ENCODE measurements at regions of chr16 and their contacts with region 1.

Region 1: DNA sequence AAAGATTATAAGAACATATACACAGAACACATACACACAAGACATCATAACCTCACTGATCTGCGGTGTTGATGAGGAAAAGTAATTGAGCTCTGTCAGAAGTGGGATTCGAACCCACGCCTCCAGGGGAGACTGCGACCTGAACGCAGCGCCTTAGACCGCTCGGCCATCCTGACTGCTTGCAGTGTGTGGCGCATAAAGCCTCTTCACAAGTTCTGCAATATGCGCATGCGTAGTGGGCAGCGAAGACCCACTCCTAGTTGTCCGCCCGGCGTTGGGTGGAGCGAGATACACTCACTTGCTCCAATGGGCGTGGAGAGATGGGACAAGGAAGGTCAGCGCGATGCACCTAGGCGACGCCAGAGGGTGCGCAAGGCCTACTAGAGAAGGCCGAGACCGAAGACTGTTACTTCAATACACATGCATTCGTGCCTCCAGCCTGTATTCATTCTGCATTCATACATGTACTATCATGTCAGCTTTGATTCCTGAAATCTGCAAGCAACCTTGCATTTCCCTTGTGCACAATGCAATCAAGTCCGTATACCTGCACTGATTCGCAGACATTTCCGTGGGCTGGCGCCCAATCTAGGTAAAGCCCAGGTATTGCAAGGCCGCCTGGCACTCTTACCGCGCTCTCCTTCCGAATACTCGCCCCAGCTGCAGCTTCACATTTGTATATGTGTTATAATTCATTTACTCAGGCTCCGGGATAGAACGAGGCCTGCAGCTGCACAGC is 16.1 kb upstream of the PLLP start:
- DNase-seq: peak; percentile 99 to 100 (median 99)
- H3K4me3 ChIP-seq: peak overlapping the region; percentile 60 to 67
- H3K4me3 Mint-ChIP-seq: no peak overlapping the region
- H3K27ac ChIP-seq: peak overlapping the region; percentile 53
- H3K27ac Mint-ChIP-seq: no peak overlapping the region
- H3K4me1 ChIP-seq: peaks cover 49% of the 10 kb centered on the region
- H3K4me1 Mint-ChIP-seq: peaks cover 12 to 27% (median 17%) of the 10 kb centered on the region in 4 donors
- H3K27me3 ChIP-seq: no peaks in the 10 kb centered on the region
- H3K27me3 Mint-ChIP-seq: no peaks in the 10 kb centered on the region

Region 2: DNA sequence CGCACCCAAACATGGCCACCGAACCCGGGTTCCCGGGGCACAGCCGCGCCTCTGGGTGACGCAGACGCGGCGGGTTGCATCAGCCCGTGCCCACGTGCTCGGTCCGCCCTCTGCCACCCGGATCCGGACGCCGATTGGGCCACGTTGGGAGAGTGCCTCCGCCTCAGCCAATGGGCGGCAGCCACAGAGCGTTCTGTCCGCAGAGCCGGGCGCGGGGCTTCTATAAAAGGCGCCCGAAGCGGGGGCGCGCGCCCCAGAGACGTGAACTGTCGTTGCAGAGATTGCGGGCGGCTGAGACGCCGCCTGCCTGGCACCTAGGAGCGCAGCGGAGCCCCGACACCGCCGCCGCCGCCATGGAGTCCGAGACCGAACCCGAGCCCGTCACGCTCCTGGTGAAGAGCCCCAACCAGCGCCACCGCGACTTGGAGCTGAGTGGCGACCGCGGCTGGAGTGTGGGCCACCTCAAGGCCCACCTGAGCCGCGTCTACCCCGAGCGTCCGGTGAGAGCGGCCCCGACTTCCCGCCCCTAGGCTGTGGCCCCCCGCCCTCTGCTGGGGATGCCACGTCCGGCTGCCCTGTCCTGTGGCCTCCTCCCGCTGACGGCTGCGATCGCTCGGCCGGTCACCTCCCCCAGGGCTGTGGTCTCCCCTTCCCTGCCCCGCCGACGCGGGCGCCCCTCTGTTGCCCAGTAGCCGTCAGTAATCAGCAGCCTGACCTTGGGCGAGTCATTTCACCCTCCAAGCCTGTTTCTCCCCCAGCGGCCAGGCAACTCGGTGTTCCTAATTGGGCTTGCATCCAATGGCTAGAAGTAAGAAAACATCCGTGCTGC is 368.4 kb before region 1 on chr16 and contains the start of gene HERPUD1:
- CTCF ChIA-PET with region 1: no interaction called
- POLR2A ChIA-PET with region 1: no interaction called
- intact Hi-C with region 1: loop called (anchors 1 kb)
- DNase-seq: peak; percentile 98 to 99 (median 99)
- H3K4me3 ChIP-seq: peak within 1 kb of the TSS; percentile 51 to 83
- H3K4me3 Mint-ChIP-seq: peak within 1 kb of the TSS; percentile 95 to 99 (median 98)
- H3K27ac ChIP-seq: peak within 1 kb of the TSS; percentile 96
- H3K27ac Mint-ChIP-seq: peak within 1 kb of the TSS; percentile 95 to 99 (median 98)
- H3K4me1 ChIP-seq: peaks cover 48% of the 10 kb centered on the region
- H3K4me1 Mint-ChIP-seq: peaks cover 23 to 52% (median 37%) of the 10 kb centered on the region in 4 donors
- H3K27me3 ChIP-seq: no peaks in the 10 kb centered on the region
- H3K27me3 Mint-ChIP-seq: no peaks in the 10 kb centered on the region
- total RNA-seq, gene HERPUD1: 130 to 136 TPM

Region 3: DNA sequence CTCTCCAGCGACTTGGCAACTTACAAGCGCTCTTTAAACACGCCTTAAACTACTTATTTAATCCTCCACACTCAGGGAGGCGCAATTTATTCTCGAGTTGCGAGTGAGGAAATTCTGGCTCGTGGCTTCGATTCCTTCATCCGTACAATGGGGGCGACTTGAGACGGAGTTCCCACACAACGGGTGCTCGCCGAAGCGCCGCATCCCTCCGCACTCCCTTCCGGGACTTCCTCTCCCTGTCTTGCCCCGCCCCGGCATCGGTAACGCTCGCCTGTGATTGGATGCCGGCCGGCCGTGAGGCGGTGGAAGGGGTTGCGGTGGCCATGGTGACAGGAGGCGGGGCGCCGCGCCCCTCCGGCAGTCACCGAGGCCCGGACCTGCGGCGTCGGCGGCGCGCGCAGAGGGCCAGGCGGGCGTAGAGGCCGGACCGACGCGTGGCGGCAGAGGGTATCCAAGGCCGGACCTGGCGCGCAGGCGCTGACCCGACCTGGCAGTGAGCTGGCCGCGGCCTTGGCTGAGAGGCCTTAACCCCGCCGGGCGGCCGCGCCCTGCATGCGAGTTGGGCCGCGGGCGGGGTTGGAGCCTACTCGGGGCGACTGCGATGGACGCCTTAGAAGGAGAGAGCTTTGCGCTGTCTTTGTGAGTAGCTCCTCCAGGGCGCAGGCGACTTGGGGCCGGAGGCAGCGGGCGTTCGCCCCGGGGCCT is 55.6 kb before region 1 on chr16 and contains the start of gene ARL2BP:
- CTCF ChIA-PET with region 1: interaction called, 15 read pairs
- POLR2A ChIA-PET with region 1: interaction called, 25 read pairs
- intact Hi-C with region 1: loop called (anchors 1 kb)
- DNase-seq: peak; percentile 94 to 98 (median 95)
- H3K4me3 ChIP-seq: peak within 1 kb of the TSS; percentile 49 to 60
- H3K4me3 Mint-ChIP-seq: peak within 1 kb of the TSS; percentile 91 to 98 (median 95)
- H3K27ac ChIP-seq: peak within 1 kb of the TSS; percentile 78
- H3K27ac Mint-ChIP-seq: peak within 1 kb of the TSS; percentile 93 to 99 (median 98)
- H3K4me1 ChIP-seq: peaks cover 17% of the 10 kb centered on the region
- H3K4me1 Mint-ChIP-seq: peaks cover 13 to 21% (median 18%) of the 10 kb centered on the region in 4 donors
- H3K27me3 ChIP-seq: no peaks in the 10 kb centered on the region
- H3K27me3 Mint-ChIP-seq: no peaks in the 10 kb centered on the region
- total RNA-seq, gene ARL2BP: 48.0 to 49.1 TPM

Region 4: DNA sequence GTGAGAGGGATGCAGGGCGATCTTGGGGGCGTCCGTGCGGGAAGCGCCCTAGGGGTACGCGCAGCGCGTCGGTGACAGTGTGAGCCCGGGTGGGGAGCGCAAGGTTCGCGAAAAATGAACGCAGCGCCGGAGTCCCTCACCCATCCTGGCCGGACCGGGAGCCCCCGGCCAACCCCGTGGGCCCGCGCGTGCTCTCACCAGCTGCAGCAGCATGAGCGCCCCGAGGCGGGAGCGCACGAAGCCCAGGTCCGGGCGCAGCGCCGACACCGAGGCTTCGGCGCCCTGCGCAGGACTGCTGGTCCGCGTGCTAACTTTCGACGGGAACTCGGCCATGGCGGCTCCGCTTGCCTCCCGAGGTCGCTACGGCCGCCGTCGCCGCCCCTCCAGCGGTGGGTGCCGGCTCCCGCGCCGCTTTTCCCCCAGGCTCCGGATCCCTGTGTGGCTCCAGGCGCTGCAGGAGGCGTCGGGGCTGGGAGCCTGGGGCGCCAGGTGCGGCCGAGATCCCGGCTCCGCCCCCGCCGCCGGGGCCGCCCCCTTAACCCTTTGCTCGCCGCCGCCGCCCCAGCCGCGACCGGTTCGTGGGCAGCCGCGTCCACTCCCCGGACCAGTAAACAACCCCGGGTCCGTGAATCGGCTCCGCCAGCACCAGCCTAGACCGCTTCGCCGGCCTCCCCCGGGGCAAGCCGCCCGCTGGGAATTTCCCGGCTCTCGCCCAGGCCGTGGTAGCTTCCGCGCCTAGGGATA is 16.2 kb before region 1 on chr16 and contains the start of gene PLLP:
- CTCF ChIA-PET with region 1: interaction called, 3 read pairs
- POLR2A ChIA-PET with region 1: interaction called, 26 read pairs
- intact Hi-C with region 1: loop called (anchors 1 kb)
- DNase-seq: peak in 4 of 5 donors; percentile 27 to 48 (median 39)
- H3K4me3 ChIP-seq: peak within 1 kb of the TSS in 1 of 2 donors; percentile 54
- H3K4me3 Mint-ChIP-seq: peak within 1 kb of the TSS; percentile 65 to 84 (median 76)
- H3K27ac ChIP-seq: no peak within 1 kb of the TSS
- H3K27ac Mint-ChIP-seq: peak within 1 kb of the TSS in 4 of 7 donors; percentile 32 to 83 (median 64)
- H3K4me1 ChIP-seq: peaks cover 31% of the 10 kb centered on the region
- H3K4me1 Mint-ChIP-seq: peaks cover 14 to 40% (median 24%) of the 10 kb centered on the region in 4 donors
- H3K27me3 ChIP-seq: no peaks in the 10 kb centered on the region
- H3K27me3 Mint-ChIP-seq: peaks cover 7% of the 10 kb centered on the region in 2 donors
- total RNA-seq, gene PLLP: 1.6 to 2.4 TPM

Region 5: DNA sequence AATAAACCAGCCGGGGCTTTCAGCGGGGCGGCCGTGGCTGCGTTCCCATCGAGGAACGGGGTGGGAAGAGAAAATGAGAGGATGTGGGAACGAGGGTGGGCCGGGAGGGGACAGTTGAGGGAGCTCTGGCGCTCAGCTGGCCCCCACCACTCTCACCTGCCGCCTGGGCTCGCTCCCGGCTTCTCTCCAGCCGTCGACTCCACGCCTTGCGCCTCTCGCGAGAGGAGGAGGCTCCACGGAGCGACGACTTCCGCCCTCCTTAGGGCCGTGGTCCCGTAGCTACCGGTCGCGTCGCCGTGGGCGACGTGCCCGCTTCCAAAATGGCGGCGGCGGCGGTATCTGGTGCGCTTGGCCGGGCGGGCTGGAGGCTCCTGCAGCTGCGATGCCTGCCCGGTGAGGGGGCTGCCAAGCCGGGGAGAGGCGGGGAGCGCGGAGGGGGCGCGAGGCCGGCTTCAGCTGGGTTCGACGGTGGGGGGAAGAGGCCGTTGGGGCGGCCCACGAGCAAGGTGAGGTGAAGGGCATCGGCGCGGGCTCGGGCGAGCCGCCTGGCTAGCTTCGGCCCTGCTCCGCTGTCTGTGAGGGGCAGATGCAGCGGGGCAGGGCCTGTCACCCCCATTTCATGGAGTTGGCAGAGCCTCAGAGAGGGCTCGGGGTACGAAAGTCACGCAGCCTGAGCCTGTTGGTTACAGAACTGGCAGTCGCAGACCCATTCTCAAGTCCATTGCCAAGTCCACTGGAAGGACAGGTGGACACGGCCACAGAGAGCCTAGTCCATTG is 146.8 kb after region 1 on chr16 and contains the starts of genes CIAPIN1 and COQ9:
- CTCF ChIA-PET with region 1: interaction called, 4 read pairs
- POLR2A ChIA-PET with region 1: interaction called, 16 read pairs
- intact Hi-C with region 1: loop called (anchors 1 kb)
- DNase-seq: peak; percentile 88 to 94 (median 91)
- H3K4me3 ChIP-seq: peak within 1 kb of the TSS; percentile 66 to 78
- H3K4me3 Mint-ChIP-seq: peak within 1 kb of the TSS; percentile 90 to 94 (median 92)
- H3K27ac ChIP-seq: peak within 1 kb of the TSS; percentile 86
- H3K27ac Mint-ChIP-seq: peak within 1 kb of the TSS; percentile 79 to 94 (median 91)
- H3K4me1 ChIP-seq: peaks cover 23% of the 10 kb centered on the region
- H3K4me1 Mint-ChIP-seq: peaks cover 15 to 38% (median 26%) of the 10 kb centered on the region in 4 donors
- H3K27me3 ChIP-seq: no peaks in the 10 kb centered on the region
- H3K27me3 Mint-ChIP-seq: no peaks in the 10 kb centered on the region
- total RNA-seq, gene CIAPIN1: 28.1 to 28.5 TPM
- total RNA-seq, gene COQ9: 35.3 to 37.7 TPM

Region 6: DNA sequence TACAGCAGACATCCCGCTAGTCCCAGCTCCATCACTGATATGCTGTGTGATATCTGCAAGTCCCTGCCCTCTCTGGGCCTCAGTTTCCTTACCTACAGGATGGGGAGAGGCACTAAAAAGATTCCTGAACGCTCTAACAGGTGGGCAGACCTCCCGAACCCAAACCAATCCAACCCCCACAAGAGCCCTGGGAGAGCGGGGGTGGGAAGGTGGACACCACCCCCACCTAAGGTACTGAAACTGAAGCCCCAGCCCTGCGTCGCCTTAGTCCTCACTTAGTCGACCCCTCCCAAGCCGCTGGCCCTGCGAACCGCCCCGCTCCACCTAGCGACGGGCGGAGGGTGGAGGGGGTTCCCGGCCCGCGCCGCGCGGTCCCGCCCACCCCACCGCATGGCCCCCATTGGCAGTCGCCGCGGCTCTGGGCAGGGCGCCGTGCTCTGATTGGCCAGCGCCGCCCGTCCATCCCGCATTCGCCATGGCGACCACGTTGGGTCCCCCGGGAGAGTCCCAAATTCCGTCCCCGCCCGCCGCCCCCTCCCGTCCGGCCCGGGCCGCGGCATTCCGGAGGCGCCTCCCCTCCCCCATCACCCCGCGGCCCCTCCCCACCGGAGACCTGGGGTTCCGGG is 235.2 kb after region 1 on chr16:
- CTCF ChIA-PET with region 1: no interaction called
- POLR2A ChIA-PET with region 1: interaction called, 4 read pairs
- intact Hi-C with region 1: loop called (anchors 1 kb)
- DNase-seq: peak; percentile 89 to 95 (median 93)
- H3K4me3 ChIP-seq: peak overlapping the region in 1 of 2 donors; percentile 51
- H3K4me3 Mint-ChIP-seq: peak overlapping the region; percentile 80 to 91 (median 83)
- H3K27ac ChIP-seq: peak overlapping the region; percentile 92
- H3K27ac Mint-ChIP-seq: peak overlapping the region; percentile 96 to 99 (median 98)
- H3K4me1 ChIP-seq: peaks cover 76% of the 10 kb centered on the region
- H3K4me1 Mint-ChIP-seq: peaks cover 60 to 76% (median 69%) of the 10 kb centered on the region in 4 donors
- H3K27me3 ChIP-seq: no peaks in the 10 kb centered on the region
- H3K27me3 Mint-ChIP-seq: no peaks in the 10 kb centered on the region

Measured in CD4-positive, alpha-beta memory T cell (primary cell).